CD14-positive monocyte (primary cell): ENCODE measurements at regions of chr1 and their contacts with region 1.

Region 1: GRCh38 chr1:150486964-150487762 is at the start of gene TARS2:
- DNase-seq: peak; percentile 96 to 99 (median 97)
- H3K4me3 ChIP-seq: peak within 1 kb of the TSS; percentile 70 to 96 (median 84)
- H3K4me3 Mint-ChIP-seq: peak within 1 kb of the TSS; percentile 97 to 99
- H3K27ac ChIP-seq: peak within 1 kb of the TSS in 1 of 2 donors; percentile 82
- H3K27ac Mint-ChIP-seq: peak within 1 kb of the TSS; percentile 90 to 98 (median 95)
- H3K4me1 ChIP-seq: peaks cover 9% of the 10 kb centered on the region in 2 donors
- H3K4me1 Mint-ChIP-seq: peaks cover 11% of the 10 kb centered on the region
- H3K27me3 ChIP-seq: no peaks in the 10 kb centered on the region
- H3K27me3 Mint-ChIP-seq: peaks cover 3% of the 10 kb centered on the region in 3 donors
- CTCF ChIP-seq: no peak
- polyA plus RNA-seq, gene TARS2: 12.0 to 14.7 (median 14.6) TPM

Region 2: GRCh38 chr1:150309770-150310508 is 177.2 kb before region 1 on chr1:
- intact Hi-C with region 1: no loop called
- DNase-seq: no peak
- H3K4me3 ChIP-seq: no peak overlapping the region
- H3K4me3 Mint-ChIP-seq: no peak overlapping the region
- H3K27ac ChIP-seq: no peak overlapping the region
- H3K27ac Mint-ChIP-seq: no peak overlapping the region
- H3K4me1 ChIP-seq: no peaks in the 10 kb centered on the region
- H3K4me1 Mint-ChIP-seq: no peaks in the 10 kb centered on the region
- H3K27me3 ChIP-seq: no peaks in the 10 kb centered on the region
- H3K27me3 Mint-ChIP-seq: peaks cover 0 to 2% (median 0%) of the 10 kb centered on the region in 3 donors
- CTCF ChIP-seq: no peak

Region 3: DNA sequence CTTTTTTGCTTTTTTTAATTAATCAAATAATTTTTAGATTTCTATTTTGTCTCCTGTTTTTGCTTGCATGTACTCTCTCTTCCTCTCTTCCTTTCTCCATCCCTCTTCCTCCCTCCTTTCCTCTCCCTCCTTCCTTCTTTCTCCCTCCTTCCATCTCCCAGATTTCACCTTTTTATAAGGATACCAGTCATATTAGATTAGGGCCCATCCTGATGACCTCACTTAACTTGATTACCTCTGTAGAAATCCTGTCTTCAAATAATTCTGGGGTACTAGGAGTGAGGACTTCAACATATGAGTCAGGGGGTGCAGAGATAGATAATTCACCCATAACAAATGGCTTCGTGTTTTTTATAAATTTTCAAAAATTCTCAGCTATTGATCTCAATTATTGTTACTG is 37.7 kb before region 1 on chr1:
- intact Hi-C with region 1: no loop called
- DNase-seq: no peak
- H3K4me3 ChIP-seq: no peak overlapping the region
- H3K4me3 Mint-ChIP-seq: no peak overlapping the region
- H3K27ac ChIP-seq: no peak overlapping the region
- H3K27ac Mint-ChIP-seq: peak overlapping the region in 3 of 7 donors; percentile 11 to 62 (median 46)
- H3K4me1 ChIP-seq: no peaks in the 10 kb centered on the region
- H3K4me1 Mint-ChIP-seq: no peaks in the 10 kb centered on the region
- H3K27me3 ChIP-seq: no peaks in the 10 kb centered on the region
- H3K27me3 Mint-ChIP-seq: no peaks in the 10 kb centered on the region
- CTCF ChIP-seq: no peak

Region 4: GRCh38 chr1:150552093-150552691 is 65.0 kb after region 1 on chr1:
- intact Hi-C with region 1: loop called in 1 of 2 experiments (anchors 10 kb)
- DNase-seq: peak; percentile 93 to 95 (median 95)
- H3K4me3 ChIP-seq: peak overlapping the region in 2 of 3 experiments; percentile 23 to 86
- H3K4me3 Mint-ChIP-seq: peak overlapping the region; percentile 64 to 95
- H3K27ac ChIP-seq: peak overlapping the region; percentile 80 to 82
- H3K27ac Mint-ChIP-seq: peak overlapping the region; percentile 94 to 99 (median 97)
- H3K4me1 ChIP-seq: peaks cover 61 to 62% of the 10 kb centered on the region in 2 donors
- H3K4me1 Mint-ChIP-seq: peaks cover 57% of the 10 kb centered on the region
- H3K27me3 ChIP-seq: no peaks in the 10 kb centered on the region
- H3K27me3 Mint-ChIP-seq: peaks cover 0 to 6% (median 2%) of the 10 kb centered on the region in 3 donors
- CTCF ChIP-seq: no peak